ENCODE measurements at regions of chr5 and their contacts with region 1.

Region 1: DNA sequence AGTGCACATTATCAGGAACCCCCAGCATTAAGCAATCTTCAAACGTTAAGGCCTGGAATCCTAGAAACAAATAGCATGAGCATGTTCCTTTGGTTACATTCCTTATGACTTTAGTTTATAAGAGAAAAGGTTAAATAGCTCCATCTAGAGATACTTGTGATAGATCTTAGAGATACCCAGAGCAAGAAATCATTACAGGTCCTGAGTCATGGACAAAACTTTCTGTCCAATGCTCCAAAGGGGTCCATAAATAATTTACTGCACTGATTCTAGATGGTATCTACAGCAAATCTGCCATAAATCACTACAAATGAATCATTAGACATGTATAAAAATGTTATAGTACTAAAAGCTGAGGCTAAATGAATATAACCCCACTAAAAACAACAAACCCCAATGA is 139.6 kb downstream of the HTR1A start:
- DNase-seq: no peak
- ATAC-seq: no peak
- H3K4me3 ChIP-seq: no peak overlapping the region
- H3K27ac ChIP-seq: no peak overlapping the region
- H3K4me1 ChIP-seq: peaks cover 0 to 3% (median 0%) of the 10 kb centered on the region in 12 donors
- H3K27me3 ChIP-seq: no peaks in the 10 kb centered on the region
- CTCF ChIP-seq: peak in 1 of 12 donors; percentile 12
- POLR2A ChIP-seq: no peak

Region 2: GRCh38 chr5:63401436-63402046 is 421.1 kb before region 1 on chr5:
- intact Hi-C with region 1: loop called in 1 of 10 experiments (anchors 10 kb)
- DNase-seq: peak; percentile 21 to 58 (median 34)
- ATAC-seq: peak in 3 of 4 donors; percentile 65 to 69 (median 69)
- H3K4me3 ChIP-seq: no peak overlapping the region
- H3K27ac ChIP-seq: no peak overlapping the region
- H3K4me1 ChIP-seq: no peaks in the 10 kb centered on the region
- H3K27me3 ChIP-seq: peaks cover 0 to 6% (median 0%) of the 10 kb centered on the region in 9 donors
- CTCF ChIP-seq: peak; percentile 44 to 84 (median 70)
- POLR2A ChIP-seq: no peak

Region 3: DNA sequence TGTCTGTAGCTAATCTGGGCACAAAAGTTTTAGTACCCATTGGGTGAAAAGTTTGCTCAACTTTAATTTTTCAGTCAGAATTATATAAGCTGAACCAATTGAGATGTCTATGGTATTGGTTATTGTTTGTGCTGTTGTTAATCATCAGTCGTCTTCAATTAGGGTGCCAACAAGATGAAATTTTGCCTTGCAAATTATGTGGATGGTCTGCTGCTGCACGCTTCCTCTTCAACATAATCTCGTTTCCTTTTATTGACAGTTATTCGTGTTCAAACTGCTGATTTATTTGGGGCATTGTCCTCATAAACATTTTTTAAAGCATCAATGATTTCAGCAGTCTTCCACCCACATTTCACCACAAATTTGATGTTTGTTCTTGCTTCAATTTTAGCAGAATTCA is 54.4 kb before region 1 on chr5:
- intact Hi-C with region 1: no loop called
- DNase-seq: no peak
- ATAC-seq: no peak
- H3K4me3 ChIP-seq: no peak overlapping the region
- H3K27ac ChIP-seq: no peak overlapping the region
- H3K4me1 ChIP-seq: no peaks in the 10 kb centered on the region
- H3K27me3 ChIP-seq: no peaks in the 10 kb centered on the region
- CTCF ChIP-seq: no peak
- POLR2A ChIP-seq: no peak

Measured in heart left ventricle (tissue), 16 donors.